ENCODE measurements at regions of chr7 and their contacts with region 1.

Region 1: DNA sequence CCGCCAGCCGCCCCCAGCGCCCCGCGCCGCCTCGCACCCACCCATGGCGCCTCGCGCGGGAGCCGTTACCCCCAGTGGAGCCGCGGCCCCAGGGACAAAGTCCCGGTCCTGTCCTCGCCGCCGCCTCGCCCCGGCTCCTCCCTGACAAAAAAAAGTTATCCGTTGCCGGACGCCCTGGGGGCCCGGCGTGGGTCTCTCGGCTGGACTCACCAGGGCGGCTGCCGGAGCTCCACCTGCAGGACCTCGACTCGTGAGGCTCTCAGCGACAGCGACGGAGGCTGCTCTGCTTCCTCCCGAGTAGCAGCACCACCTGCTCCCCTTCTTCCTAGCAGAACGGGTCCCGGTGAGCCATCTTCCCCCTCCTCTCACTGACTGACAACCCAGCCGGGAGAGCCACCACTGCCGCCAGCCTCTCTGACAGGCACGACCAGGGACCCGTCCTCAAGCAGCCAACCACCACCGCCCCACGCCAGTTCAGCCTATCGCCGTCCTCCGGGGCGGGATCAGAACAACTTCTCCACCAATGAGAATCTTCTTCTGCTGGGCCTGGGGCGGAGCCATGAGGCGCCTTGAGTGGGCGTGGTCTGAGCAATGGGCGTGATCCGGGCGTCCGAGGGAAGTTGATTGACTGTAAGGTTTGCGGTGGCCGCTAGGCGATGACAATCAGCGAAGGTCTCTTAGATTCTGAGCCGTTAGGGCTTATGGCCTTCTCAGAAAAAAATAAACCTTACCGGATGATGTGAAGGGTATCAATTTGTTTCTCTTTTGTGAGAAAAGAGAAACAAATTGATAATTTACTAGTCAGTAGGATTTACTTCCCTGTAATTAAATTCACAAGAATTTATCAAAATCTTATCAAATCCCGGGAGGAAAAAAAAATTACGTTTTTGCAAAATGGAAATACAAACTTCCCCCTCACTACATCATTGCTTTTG is at the start of gene HYCC1:
- DNase-seq: peak; percentile 98
- ATAC-seq: peak; percentile 98
- H3K4me3 ChIP-seq: peak within 1 kb of the TSS; percentile 76
- H3K27ac ChIP-seq: peak within 1 kb of the TSS; percentile 44; the same call in 1 of the 2 replicates
- H3K4me1 ChIP-seq: peaks cover 6 to 19% of the 10 kb centered on the region in 2 experiments; a peak in 3 of 4 replicates
- H3K27me3 ChIP-seq: no peaks in the 10 kb centered on the region
- CTCF ChIP-seq: peak in 2 of 3 experiments; percentile 48 to 51; a peak in 4 of 6 replicates
- POLR2A ChIP-seq: peak; percentile 89
- RAD21 ChIP-seq: no peak
- total RNA-seq, gene HYCC1: 23.5 TPM

Region 2: GRCh38 chr7:22860784-22861482 is 153.0 kb before region 1 on chr7:
- CTCF ChIA-PET with region 1: no interaction called
- POLR2A ChIA-PET with region 1: no interaction called
- RAD21 ChIA-PET with region 1: no interaction called
- intact Hi-C with region 1: loop called (anchors 5 kb)
- DNase-seq: no peak
- ATAC-seq: peak; percentile 31; the same call in 1 of the 2 replicates
- H3K4me3 ChIP-seq: no peak overlapping the region
- H3K27ac ChIP-seq: peak overlapping the region; percentile 97; the same call in 1 of the 2 replicates
- H3K4me1 ChIP-seq: peaks cover 39 to 46% of the 10 kb centered on the region in 2 experiments
- H3K27me3 ChIP-seq: no peaks in the 10 kb centered on the region
- CTCF ChIP-seq: peak; percentile 38 to 83 (median 74); a peak in 5 of 6 replicates
- POLR2A ChIP-seq: peak; percentile 22
- RAD21 ChIP-seq: peak; percentile 53

Region 3: DNA sequence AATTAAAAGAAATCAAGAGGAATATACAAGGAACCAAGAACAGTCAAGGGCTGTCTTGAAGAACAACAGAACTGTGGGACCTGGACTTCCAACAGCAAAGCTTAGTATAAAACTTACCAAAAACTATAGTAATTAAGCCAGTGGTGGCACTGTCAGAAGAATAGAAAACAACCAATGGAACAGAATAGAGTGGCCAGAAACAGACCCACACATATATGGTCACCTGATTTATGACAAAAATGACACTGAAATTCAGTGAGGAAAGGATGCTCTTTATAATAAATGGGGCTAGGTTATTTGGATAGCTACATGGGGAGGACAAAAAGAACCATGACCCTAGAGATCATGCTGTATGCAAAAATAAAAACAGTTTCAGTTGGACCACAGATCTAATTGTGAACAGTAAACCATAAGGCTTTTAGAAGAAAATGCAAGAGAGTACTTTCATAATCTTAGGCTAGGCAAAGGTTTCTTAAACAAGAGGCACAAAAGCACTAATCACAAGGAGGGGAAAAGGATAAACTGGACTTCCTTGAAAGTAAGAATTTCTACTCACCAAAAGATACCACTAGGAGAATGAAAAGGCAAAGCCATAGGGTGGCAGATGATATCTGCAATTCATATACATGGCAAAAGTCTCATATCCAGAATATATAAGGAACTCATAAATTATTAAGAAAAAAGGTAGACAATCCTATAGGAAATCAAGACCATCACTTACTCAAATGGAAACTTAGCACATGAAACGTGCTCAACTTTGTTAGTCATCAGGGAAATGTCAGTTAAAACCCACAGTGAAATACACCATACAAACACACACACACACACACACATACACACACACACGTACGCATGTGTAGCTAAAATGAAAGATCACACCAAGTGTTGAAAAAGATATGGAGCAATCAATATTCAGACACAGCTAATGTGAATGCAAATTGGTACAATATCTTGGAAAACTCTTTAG is 20.8 kb before region 1 on chr7:
- CTCF ChIA-PET with region 1: no interaction called
- POLR2A ChIA-PET with region 1: no interaction called
- RAD21 ChIA-PET with region 1: no interaction called
- intact Hi-C with region 1: no loop called
- DNase-seq: no peak
- ATAC-seq: no peak
- H3K4me3 ChIP-seq: no peak overlapping the region
- H3K27ac ChIP-seq: no peak overlapping the region
- H3K4me1 ChIP-seq: no peaks in the 10 kb centered on the region
- H3K27me3 ChIP-seq: no peaks in the 10 kb centered on the region
- CTCF ChIP-seq: no peak
- POLR2A ChIP-seq: no peak
- RAD21 ChIP-seq: no peak

Region 4: DNA sequence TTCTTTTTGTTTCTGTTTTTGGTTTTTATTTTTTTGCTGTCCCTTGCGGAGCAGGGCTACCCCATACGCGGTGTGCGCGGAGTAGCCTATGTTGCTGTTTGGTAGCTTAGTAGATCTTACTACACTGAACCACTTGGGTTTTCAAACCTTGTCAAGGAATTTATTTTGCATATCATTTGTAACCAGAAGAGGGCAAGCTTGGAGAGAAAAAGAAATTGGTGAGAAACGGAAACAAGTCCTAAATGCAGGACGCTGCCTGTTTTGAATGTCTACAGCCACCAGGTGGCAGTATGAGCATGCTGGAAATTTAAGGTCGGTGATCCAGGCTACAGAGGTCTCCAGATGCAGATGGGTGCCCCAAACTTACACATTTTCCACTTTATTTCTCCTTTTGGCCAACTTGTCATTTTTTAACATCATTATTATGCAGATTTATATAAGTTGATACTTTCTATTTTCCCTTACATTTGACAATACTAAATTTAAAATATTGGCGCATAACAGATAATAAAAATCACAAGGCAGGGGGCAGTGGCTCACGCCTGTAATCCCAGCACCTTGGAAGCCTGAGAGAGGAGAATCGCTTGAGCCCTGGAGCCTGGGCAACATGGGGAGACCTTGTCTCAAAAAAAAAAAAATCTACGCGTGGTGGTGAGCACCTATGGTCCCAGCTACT is 533.1 kb after region 1 on chr7:
- CTCF ChIA-PET with region 1: no interaction called
- POLR2A ChIA-PET with region 1: no interaction called
- RAD21 ChIA-PET with region 1: no interaction called
- intact Hi-C with region 1: no loop called
- DNase-seq: peak; percentile 88
- ATAC-seq: peak; percentile 87
- H3K4me3 ChIP-seq: no peak overlapping the region
- H3K27ac ChIP-seq: no peak overlapping the region
- H3K4me1 ChIP-seq: peaks cover 4 to 7% of the 10 kb centered on the region in 2 experiments; a peak in 3 of 4 replicates
- H3K27me3 ChIP-seq: no peaks in the 10 kb centered on the region
- CTCF ChIP-seq: peak; percentile 83 to 99 (median 98)
- POLR2A ChIP-seq: no peak
- RAD21 ChIP-seq: peak; percentile 95

Measured in HCT116 (cell line).